Panc1 (cell line): ENCODE measurements at regions of chr22 and their contacts with region 1.

Region 1: DNA sequence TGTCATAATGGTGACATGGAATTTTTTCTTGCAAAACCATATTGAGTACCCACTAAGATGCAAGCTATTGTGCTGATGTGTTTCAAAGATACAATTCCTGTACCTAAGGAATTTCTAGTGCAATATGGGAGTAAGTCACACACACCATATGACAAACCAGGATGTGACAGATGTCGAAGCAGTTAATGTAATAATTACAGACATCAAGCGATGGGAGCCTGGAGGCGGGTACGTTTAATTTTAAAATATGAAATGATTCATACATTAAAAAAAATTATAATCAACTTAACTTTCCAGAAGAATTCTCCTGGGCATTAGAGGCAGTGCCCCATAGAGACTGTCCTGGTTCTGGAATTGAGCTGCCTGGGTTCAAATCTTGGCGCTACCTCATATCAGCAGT is 6.0 kb downstream of the SYCE3 start:
- DNase-seq: no peak
- ATAC-seq: no peak
- H3K4me3 ChIP-seq: no peak overlapping the region
- H3K27ac ChIP-seq: no peak overlapping the region
- H3K4me1 ChIP-seq: no peaks in the 10 kb centered on the region
- H3K27me3 ChIP-seq: no peaks in the 10 kb centered on the region
- CTCF ChIP-seq: no peak

Region 2: DNA sequence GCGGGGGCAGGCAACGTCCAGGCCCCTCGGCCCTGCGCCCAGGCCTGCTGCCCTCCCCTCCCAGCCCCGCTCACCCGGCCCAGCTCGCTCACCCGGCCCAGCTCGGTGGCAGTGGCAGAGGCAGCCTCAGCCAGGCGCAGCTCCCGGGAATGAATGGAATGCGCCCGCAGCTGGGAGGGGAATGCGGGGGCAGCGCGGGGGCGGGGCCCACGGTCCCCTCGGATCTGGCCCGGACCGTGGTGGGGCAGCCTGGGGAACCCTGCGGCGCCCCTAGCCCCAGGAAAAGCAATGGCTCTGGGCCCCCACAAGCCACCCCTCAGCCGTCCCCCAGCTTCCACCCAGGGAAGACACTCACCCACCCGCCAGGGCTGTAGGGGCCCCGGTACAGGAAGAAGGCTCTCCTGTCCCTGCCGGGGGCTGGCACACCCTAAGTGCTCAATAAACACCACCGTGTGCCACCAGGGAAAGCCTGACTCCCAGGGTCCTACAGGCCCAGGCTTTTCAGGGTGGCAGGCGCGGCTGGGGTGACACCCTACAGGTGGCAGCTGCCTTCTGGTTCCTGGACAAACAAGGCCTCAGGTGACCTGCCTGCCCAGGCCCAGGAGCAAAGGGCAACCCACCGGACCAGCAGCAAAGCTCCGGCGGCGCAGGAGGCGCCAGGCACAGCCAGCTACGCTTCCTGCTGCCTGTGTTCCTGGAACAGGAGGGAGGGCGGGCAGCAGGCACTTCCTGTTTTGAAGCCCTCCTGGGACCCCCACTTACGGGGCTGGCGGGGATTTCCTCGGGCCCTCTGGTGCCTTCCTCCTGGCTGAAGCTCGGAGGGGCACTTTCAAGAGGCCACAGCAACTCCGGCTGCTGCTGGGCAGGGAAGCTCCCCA is 263.0 kb before region 1 on chr22:
- CTCF ChIA-PET with region 1: no interaction called
- POLR2A ChIA-PET with region 1: no interaction called
- in situ Hi-C with region 1: no loop called
- intact Hi-C with region 1: no loop called
- DNase-seq: no peak
- ATAC-seq: peak; percentile 68
- H3K4me3 ChIP-seq: peak overlapping the region; percentile 16; a peak in 3 of 4 replicates
- H3K27ac ChIP-seq: peak overlapping the region; percentile 87
- H3K4me1 ChIP-seq: peaks cover 51% of the 10 kb centered on the region
- H3K27me3 ChIP-seq: no peaks in the 10 kb centered on the region
- CTCF ChIP-seq: no peak

Region 3: GRCh38 chr22:50306753-50307749 is 249.7 kb before region 1 on chr22 and contains the start of gene PLXNB2:
- CTCF ChIA-PET with region 1: no interaction called
- POLR2A ChIA-PET with region 1: no interaction called
- in situ Hi-C with region 1: no loop called
- intact Hi-C with region 1: no loop called
- DNase-seq: no peak
- ATAC-seq: peak; percentile 27
- H3K4me3 ChIP-seq: peak within 1 kb of the TSS; percentile 60 to 74
- H3K27ac ChIP-seq: peak within 1 kb of the TSS; percentile 91
- H3K4me1 ChIP-seq: peaks cover 54% of the 10 kb centered on the region
- H3K27me3 ChIP-seq: no peaks in the 10 kb centered on the region
- CTCF ChIP-seq: no peak
- total RNA-seq, gene PLXNB2: 227 TPM

Region 4: DNA sequence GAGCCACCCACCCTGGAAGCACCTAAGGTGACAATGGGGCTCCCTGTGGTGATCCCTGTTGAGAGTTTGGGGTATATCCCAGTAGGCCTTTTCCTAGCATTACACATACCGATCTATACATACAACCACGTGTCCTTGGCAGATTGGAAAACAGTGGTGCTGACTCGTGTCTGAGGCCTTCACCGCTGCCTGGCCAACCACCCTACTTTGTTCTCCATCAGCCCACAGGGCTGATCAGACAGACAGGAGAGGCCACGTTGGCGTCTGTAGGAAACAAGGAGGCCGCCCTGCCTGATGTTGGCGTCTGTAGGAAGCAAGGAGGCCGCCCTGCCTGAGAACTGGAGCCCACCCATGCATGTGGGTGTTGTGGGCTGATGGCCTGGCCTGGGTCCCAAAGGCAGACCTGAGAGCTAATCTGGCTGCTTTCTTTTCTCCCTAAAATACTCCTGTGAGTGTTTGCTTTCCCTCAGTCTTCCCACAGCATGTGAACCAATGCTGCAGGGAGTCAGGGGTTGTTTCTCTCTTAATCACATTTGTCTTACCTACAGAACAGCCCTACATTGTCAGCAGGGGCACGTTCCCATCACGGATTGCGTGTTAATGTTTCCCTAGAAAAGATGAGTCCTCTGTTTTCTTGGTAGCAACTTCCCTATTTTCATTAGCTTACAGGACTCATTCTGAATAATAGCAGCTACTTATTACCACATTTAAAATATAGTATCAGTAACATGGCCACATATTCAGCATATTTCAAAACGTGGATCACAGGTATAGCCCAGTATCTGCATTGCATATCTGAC is 139.1 kb before region 1 on chr22:
- CTCF ChIA-PET with region 1: no interaction called
- POLR2A ChIA-PET with region 1: no interaction called
- in situ Hi-C with region 1: no loop called
- intact Hi-C with region 1: no loop called
- DNase-seq: no peak
- ATAC-seq: no peak
- H3K4me3 ChIP-seq: no peak overlapping the region
- H3K27ac ChIP-seq: no peak overlapping the region
- H3K4me1 ChIP-seq: no peaks in the 10 kb centered on the region
- H3K27me3 ChIP-seq: no peaks in the 10 kb centered on the region
- CTCF ChIP-seq: no peak

Region 5: GRCh38 chr22:50544078-50544745 is 12.5 kb before region 1 on chr22:
- CTCF ChIA-PET with region 1: no interaction called
- POLR2A ChIA-PET with region 1: interaction called, 18 read pairs
- in situ Hi-C with region 1: no loop called
- intact Hi-C with region 1: no loop called
- DNase-seq: no peak
- ATAC-seq: peak; percentile 84
- H3K4me3 ChIP-seq: peak overlapping the region; percentile 19 to 43
- H3K27ac ChIP-seq: peak overlapping the region; percentile 68; the same call in 1 of the 2 replicates
- H3K4me1 ChIP-seq: peaks cover 14% of the 10 kb centered on the region
- H3K27me3 ChIP-seq: no peaks in the 10 kb centered on the region
- CTCF ChIP-seq: peak; percentile 81; the same call in 1 of the 2 replicates

Region 6: DNA sequence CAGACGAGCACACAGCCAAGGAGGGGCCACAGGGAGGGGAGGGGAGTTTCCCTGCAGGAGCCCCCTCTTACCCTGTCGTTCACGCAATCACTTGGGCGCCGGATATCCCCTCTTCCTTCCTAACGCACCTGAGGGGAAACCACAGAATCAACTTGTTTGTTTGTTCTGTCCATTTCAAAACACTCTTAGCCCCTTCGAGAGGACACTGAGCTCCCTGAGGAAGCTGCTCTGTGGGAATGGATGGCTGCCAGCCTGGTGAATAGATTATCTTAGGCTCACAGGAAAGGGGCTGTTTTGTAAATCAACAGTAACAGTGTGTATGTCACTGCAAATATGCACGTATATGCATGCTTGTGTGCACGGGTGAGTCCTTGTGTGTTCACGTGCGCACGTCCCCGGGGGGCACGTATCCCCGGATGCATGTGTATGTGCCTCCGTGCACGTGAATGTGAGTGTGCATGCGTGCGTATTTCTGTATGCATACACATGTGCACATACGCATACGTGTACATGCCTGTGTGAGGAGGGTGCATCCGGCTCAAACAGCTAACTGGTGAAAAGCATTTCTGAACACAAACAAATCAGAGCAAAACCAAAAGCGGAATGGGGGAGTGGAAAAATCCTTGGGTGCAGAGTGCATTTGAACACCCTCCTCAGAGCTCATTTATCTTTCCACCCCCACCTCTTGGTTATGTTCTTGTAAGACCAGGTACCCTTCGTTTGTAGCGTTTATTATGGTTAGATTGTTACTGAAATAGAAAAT is 64.1 kb after region 1 on chr22:
- CTCF ChIA-PET with region 1: no interaction called
- POLR2A ChIA-PET with region 1: no interaction called
- in situ Hi-C with region 1: no loop called
- intact Hi-C with region 1: no loop called
- DNase-seq: no peak
- ATAC-seq: peak; percentile 79
- H3K4me3 ChIP-seq: peak overlapping the region; percentile 28 to 65
- H3K27ac ChIP-seq: no peak overlapping the region
- H3K4me1 ChIP-seq: peaks cover 7% of the 10 kb centered on the region
- H3K27me3 ChIP-seq: no peaks in the 10 kb centered on the region
- CTCF ChIP-seq: peak; percentile 67